ENCODE measurements at regions of chrX and their contacts with region 1.

Region 1: DNA sequence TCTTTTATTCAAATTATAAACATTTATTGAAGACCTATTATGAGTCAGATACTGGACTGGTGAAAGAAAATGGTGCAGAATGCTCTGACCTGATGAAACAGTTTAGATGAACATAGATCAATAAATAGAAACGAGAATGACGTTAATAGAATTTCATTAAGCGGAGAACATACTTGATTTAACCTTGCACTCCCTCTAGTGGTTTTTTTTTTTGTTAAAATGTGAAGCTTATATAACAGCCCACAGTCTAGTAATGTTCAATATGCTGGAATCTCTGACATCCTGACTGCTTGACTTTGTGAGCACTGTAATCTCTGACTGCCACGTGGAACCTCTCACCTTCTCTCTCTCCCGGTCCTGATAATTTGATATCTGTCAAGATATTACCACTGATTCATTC is 32.3 kb downstream of the HDAC8 start:
- DNase-seq: no peak
- CTCF ChIP-seq: no peak

Region 2: DNA sequence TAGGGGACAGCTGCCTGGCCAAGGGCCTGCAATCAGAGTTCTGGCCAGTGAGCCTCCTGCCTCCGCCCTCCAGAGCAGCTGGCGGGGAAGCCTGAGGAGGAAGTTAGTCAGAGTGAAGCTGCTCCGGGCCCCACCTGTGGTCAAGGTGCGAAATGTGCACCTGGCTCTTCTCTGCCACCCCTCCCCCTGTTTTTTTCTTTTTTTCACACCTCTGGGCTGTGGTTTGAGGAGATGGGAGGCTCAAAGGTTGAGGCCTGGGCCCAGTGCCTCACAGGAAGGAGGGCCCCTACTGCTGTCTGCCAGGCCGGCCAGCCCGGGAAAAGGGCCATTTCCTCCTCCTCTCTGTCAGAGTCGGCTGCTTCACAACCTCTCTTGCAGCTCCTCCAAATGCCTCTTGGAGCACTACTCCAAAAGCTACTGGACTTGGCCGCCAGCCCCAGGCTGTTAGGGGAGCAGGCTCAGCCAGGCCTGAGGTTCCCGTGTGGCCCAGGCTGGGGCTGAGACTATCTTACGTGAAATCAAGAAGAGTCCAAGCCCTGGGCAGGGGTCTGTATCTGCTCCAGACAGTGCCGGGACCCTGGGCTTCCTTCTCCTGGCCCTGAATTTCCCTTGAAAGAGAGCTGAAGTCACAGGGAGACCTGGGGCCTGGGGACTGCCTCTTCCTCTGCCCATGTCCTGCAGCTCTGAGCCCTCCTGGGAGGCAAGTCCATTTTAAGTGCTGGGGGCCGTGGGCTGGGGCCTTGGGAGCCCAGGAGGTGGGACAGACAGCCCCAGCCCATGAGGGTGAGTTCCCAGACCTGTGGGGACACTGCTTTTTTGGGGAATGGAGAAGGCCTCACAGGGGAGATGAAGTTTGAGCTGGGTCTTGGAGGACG is 917.5 kb before region 1 on chrX:
- in situ Hi-C with region 1: no loop called
- DNase-seq: peak; percentile 68
- CTCF ChIP-seq: no peak

Region 3: DNA sequence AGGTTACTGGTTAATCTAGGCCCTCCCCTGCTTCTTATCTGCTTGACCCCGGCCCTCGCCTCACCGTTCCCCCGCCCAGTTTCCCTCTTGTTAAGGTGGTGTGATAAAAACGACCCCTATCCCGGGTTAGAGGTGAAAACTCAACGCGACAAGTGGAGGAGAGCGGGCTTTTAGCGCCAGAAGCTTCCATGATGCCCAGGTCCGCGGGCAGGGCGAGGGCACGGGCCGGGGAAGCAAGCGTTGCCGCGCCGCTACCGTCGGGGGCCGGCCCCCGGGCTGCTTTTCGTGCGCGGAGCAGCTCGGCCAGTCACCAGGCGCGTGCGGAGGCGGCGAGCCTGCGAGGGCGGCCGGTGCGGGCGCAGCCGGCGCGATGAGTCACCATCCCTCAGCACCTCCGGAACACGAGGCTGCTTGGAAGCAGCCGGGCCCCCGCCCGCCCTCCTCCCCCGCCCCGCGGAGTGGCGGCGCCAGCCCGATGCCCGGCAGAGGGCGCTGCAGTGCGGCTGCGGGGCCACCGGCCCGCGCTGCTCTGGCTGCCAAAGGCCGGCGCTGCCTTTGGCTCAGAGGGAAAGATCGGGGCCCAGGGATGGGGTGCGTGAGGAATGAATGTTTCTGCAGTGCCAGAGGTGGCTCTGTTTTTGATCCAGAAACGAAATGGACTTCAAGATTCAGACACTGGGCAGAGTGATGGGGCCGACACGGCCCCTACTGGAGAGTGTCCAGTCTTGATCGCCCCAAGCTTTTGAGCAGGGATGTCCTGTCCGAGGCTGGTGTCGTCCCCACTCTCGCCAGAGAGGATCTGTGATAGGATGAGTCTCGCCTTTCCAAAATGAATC is 521.8 kb before region 1 on chrX:
- in situ Hi-C with region 1: loop called (anchors 25 kb)
- DNase-seq: peak; percentile 83
- CTCF ChIP-seq: peak; percentile 51

Region 4: DNA sequence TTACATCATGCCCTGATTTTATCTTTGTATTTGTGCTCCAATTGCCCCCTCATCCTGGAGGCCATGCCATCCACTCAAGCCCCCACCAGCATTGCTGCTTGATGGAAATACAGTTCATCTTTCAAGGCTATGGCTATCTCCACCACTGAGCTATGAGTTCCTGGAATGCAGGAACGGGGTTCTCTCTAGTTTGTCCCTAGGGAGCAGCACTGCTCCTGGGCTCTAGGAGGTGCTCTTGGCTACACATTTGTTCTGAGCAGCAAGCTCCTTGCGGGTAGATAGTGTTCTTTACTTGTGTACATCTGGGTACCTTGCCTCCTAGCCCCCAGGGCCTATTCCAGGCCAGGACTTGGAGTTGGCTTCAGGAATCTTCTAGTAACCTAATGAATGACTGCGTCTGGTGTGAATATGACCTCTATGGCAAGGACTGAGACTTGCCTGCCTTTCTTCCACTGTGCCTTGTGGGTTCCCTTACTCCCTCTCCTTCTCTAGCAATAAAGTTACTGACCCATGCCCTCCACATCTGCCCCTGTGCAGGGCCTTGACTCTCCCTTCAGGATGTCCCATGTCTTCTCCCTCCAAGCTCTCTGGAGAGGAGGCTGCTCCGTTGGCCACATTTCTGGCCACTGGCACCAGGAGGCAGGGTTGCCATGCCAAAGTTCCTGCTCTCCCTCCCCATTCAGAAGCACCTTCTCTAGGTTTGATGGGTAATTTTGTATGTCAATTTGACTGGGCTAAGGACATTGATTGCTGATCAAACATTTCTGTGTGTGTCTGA is 242.2 kb before region 1 on chrX:
- in situ Hi-C with region 1: loop called (anchors 25 kb)
- DNase-seq: peak; percentile 36
- CTCF ChIP-seq: no peak

Region 5: DNA sequence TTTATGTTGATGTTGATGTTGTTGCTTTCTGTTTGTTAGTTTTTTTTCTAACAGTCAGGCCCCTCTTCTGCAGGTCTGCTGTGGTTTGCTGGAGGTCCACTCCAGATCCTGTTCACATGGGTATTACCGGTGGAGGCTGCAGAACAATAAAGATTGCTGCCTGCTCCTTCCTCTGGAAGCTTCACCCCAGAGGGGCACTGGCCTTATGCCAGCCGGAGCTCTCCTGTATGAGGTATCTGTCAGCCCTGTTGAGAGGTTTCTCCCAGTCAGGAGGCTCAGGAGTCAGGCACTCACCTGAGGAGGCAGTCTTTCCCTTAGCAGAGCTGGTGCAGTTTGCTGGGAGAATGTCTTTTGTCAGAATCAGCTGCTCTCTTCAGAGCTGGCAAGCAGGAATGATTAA is 941.2 kb after region 1 on chrX:
- in situ Hi-C with region 1: no loop called
- DNase-seq: no peak
- CTCF ChIP-seq: no peak